ENCODE measurements at regions of chr1 and their contacts with region 1.

Region 1: DNA sequence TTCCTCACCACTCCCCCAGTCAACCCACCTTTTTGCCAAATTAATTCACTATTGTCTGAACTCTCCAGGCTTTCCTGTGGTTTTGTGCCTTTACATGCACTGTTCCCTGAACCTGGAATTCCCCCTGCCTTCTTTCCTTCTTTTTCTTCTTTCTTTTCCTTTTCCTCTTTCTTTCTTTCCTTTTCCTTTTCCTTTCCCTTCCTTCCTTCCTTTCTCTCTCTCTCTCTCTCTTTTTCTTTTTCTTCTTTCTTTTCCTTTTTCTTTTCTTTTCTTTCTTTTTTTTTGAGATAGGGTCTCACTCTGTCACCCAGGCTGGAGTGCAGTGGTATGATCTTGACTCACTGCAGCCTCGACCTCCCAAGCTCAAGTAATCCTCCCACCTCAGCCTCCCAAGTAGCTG is 56.6 kb upstream of the CDC42BPA start:
- DNase-seq: no peak
- H3K4me3 ChIP-seq: no peak overlapping the region
- H3K4me3 Mint-ChIP-seq: no peak overlapping the region
- H3K27ac Mint-ChIP-seq: no peak overlapping the region
- H3K4me1 ChIP-seq: no peaks in the 10 kb centered on the region
- H3K4me1 Mint-ChIP-seq: peaks cover 6% of the 10 kb centered on the region
- H3K27me3 ChIP-seq: no peaks in the 10 kb centered on the region
- H3K27me3 Mint-ChIP-seq: no peaks in the 10 kb centered on the region
- CTCF ChIP-seq: no peak

Region 2: DNA sequence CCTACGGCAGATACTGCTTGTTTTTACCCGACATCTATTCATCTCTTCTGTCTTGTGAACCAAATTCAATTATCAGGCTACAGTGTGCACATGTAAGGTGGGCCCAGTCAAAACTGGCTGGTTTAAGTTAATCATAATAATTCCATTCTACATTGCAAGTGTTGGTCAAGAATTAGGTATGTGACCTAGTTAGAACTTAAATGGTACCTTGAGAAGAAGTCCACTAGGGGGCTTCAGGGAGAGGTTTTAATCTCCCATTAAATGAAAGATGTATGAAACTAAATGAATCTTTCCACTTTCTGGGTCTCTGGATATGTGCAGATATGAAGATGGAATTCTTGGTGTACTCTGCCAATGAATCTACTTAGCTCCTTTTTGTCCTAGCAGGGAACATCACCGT is 243.7 kb before region 1 on chr1:
- CTCF ChIA-PET with region 1: interaction called, 12 read pairs
- POLR2A ChIA-PET with region 1: no interaction called
- intact Hi-C with region 1: no loop called
- DNase-seq: no peak
- H3K4me3 ChIP-seq: no peak overlapping the region
- H3K4me3 Mint-ChIP-seq: no peak overlapping the region
- H3K27ac Mint-ChIP-seq: no peak overlapping the region
- H3K4me1 ChIP-seq: peaks cover 19% of the 10 kb centered on the region
- H3K4me1 Mint-ChIP-seq: peaks cover 27% of the 10 kb centered on the region
- H3K27me3 ChIP-seq: no peaks in the 10 kb centered on the region
- H3K27me3 Mint-ChIP-seq: no peaks in the 10 kb centered on the region
- CTCF ChIP-seq: peak; percentile 40 to 47

Region 3: DNA sequence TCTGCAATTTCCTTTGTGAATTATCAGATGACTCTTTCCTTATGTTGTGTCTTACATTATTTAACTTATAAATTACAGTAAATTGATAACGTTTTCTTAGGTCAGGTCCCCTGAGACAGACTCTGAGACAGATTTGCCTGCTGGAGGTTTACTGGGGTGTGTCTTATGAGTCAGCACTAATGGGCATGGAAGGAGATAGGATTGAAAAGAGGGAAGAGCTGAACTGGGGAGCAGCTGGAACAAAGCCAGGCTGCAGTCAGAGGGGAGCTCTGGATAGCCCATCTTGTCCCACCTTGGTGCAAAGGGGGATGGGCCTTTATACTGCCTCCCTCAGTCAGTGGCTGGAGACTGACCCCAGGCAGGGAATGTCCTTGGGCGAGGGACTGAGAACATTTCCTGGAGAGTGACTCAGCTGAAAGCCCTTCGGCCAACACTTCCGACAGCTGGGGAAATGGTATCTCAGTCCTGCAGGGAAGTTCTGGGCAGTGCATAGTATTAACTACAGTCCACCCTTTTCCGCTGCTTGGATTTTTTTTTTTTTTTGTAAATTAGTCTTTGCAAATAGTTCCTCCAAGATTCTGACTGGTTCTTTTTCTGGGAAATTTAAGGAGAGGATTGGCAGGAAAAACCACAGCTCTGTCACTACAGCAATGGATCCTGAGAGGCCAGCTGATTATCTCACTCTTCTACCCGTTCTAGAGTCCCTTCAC is 17.5 kb before region 1 on chr1:
- CTCF ChIA-PET with region 1: no interaction called
- POLR2A ChIA-PET with region 1: no interaction called
- intact Hi-C with region 1: no loop called
- DNase-seq: peak; percentile 32 to 67
- H3K4me3 ChIP-seq: no peak overlapping the region; the same call in 1 of the 2 replicates
- H3K4me3 Mint-ChIP-seq: no peak overlapping the region
- H3K27ac Mint-ChIP-seq: peak overlapping the region; percentile 69
- H3K4me1 ChIP-seq: peaks cover 17% of the 10 kb centered on the region
- H3K4me1 Mint-ChIP-seq: peaks cover 12% of the 10 kb centered on the region
- H3K27me3 ChIP-seq: no peaks in the 10 kb centered on the region
- H3K27me3 Mint-ChIP-seq: no peaks in the 10 kb centered on the region
- CTCF ChIP-seq: no peak

Measured in Caco-2 (cell line).